ENCODE measurements at regions of chr11 and their contacts with region 1.

Region 1: GRCh38 chr11:1050581-1051355 is 14.2 kb upstream of the MUC6 start:
- DNase-seq: peak; percentile 80
- H3K4me3 ChIP-seq: no peak overlapping the region
- H3K27ac ChIP-seq: no peak overlapping the region
- H3K4me1 ChIP-seq: peaks cover 18% of the 10 kb centered on the region
- H3K27me3 ChIP-seq: no peaks in the 10 kb centered on the region
- CTCF ChIP-seq: peak; percentile 93 to 99

Region 2: GRCh38 chr11:662689-663274 is 388.0 kb before region 1 on chr11:
- CTCF ChIA-PET with region 1: no interaction called
- dilution Hi-C with region 1: no loop called
- in situ Hi-C with region 1: no loop called
- intact Hi-C with region 1: loop called (anchors 5 kb)
- DNase-seq: peak; percentile 35
- H3K4me3 ChIP-seq: no peak overlapping the region
- H3K27ac ChIP-seq: no peak overlapping the region
- H3K4me1 ChIP-seq: peaks cover 16% of the 10 kb centered on the region
- H3K27me3 ChIP-seq: no peaks in the 10 kb centered on the region
- CTCF ChIP-seq: peak; percentile 74 to 78

Region 3: DNA sequence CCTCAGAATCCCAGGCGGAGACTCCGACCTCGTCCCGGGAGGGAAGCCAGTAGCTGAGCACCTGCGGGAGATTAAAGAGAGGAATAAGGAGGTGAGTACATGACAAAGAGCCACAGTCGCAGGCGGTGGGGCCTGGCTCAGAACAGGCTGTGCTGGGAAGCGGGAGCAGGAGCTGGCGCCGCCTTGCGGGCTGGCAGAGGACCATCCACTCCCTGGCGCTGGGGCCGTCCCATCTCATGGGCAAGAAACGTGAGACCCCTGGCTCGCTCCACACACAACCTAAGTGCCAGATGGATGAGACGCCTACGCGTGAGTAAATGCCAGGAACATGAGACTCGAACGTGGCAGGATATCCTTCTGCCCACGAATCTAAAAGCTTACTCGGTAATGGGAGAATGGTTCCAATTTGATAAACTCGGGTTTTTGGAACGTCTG is 267.2 kb before region 1 on chr11:
- CTCF ChIA-PET with region 1: no interaction called
- dilution Hi-C with region 1: no loop called
- in situ Hi-C with region 1: no loop called
- intact Hi-C with region 1: loop called (anchors 5 kb)
- DNase-seq: peak; percentile 72
- H3K4me3 ChIP-seq: no peak overlapping the region
- H3K27ac ChIP-seq: no peak overlapping the region
- H3K4me1 ChIP-seq: peaks cover 32% of the 10 kb centered on the region
- H3K27me3 ChIP-seq: no peaks in the 10 kb centered on the region
- CTCF ChIP-seq: peak; percentile 69 to 81

Region 4: DNA sequence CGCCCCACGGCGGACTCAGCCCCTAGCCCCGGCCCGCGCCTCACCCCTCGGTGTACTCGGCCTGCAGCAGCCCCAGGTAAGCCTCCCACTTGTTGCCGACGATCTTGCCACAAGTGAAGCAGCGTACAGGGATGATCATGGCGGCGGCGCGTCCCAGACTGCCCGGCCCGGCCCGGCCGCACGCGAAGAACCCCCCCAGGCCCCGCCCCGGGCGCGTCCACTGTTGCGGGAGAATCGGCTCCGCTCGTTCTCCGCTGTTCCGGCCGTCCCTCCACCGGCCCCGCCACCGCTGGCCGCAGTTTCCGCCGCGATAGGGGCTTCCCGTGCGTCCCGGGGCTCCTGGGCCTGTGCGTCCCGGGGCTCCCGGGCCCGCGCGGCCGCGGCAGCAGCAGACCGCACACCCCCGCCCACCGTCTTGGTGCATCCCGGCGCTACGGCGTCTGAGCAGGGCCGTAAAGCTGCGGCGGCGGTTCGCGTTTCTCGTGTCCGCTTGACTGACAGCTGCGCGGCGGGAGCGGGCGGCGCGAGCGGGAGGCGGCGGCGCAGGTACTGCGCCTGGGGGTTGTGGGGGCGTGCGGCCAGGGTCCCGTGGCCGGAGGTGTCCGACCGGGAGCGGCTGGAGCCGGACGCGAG is 208.3 kb before region 1 on chr11 and contains the starts of genes POLR2L and TSPAN4:
- CTCF ChIA-PET with region 1: no interaction called
- dilution Hi-C with region 1: no loop called
- in situ Hi-C with region 1: no loop called
- intact Hi-C with region 1: loop called (anchors 1 kb)
- DNase-seq: peak; percentile 86
- H3K4me3 ChIP-seq: peak within 1 kb of the TSS; percentile 90 to 98 (median 93)
- H3K27ac ChIP-seq: peak within 1 kb of the TSS; percentile 75
- H3K4me1 ChIP-seq: peaks cover 71% of the 10 kb centered on the region
- H3K27me3 ChIP-seq: no peaks in the 10 kb centered on the region
- CTCF ChIP-seq: no peak
- total RNA-seq, gene POLR2L: 60.0 to 193 TPM
- total RNA-seq, gene TSPAN4: 50.3 to 81.7 TPM

Region 5: GRCh38 chr11:925496-926321 is 125.1 kb before region 1 on chr11 and contains the start of gene AP2A2:
- CTCF ChIA-PET with region 1: interaction called, 3 read pairs
- dilution Hi-C with region 1: no loop called
- in situ Hi-C with region 1: no loop called
- intact Hi-C with region 1: loop called (anchors 1 kb)
- DNase-seq: peak; percentile 81
- H3K4me3 ChIP-seq: peak within 1 kb of the TSS; percentile 72 to 82 (median 78)
- H3K27ac ChIP-seq: peak within 1 kb of the TSS; percentile 29
- H3K4me1 ChIP-seq: peaks cover 6% of the 10 kb centered on the region
- H3K27me3 ChIP-seq: no peaks in the 10 kb centered on the region
- CTCF ChIP-seq: peak; percentile 39 to 57
- total RNA-seq, gene AP2A2: 66.6 to 66.7 TPM

Region 6: DNA sequence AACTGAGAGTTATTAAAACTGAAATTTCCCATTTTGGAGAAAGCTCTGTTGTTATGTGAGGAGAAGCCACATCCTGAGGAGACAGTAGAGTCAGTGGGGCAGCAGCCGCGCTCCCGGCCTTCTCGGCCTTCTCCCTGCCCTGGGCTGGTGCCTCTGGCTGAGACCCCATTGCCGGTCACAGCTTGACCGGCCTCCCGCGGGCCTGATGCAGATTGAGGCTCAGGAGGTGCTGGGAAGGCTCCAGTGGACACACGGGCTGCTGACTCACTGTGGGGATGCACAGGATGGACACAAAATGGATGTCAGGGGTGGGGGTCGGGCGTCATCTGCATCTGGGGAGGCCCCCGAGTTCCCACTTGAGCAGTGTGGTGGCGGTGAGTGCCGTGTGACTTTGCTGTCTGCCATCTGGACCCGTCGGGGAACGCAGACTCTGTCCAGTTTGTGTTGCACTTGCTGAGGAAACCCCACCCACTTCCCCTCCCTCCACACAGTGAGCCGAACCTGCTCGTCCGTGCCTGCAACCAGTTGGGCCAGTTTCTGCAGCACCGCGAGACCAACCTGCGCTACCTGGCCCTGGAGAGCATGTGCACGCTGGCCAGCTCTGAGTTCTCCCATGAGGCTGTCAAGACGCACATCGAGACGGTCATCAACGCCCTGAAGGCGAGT is 64.3 kb before region 1 on chr11:
- CTCF ChIA-PET with region 1: no interaction called
- dilution Hi-C with region 1: loop called (anchors 5 kb)
- in situ Hi-C with region 1: no loop called
- intact Hi-C with region 1: no loop called
- DNase-seq: no peak
- H3K4me3 ChIP-seq: no peak overlapping the region
- H3K27ac ChIP-seq: no peak overlapping the region
- H3K4me1 ChIP-seq: no peaks in the 10 kb centered on the region
- H3K27me3 ChIP-seq: no peaks in the 10 kb centered on the region
- CTCF ChIP-seq: no peak

Region 7: DNA sequence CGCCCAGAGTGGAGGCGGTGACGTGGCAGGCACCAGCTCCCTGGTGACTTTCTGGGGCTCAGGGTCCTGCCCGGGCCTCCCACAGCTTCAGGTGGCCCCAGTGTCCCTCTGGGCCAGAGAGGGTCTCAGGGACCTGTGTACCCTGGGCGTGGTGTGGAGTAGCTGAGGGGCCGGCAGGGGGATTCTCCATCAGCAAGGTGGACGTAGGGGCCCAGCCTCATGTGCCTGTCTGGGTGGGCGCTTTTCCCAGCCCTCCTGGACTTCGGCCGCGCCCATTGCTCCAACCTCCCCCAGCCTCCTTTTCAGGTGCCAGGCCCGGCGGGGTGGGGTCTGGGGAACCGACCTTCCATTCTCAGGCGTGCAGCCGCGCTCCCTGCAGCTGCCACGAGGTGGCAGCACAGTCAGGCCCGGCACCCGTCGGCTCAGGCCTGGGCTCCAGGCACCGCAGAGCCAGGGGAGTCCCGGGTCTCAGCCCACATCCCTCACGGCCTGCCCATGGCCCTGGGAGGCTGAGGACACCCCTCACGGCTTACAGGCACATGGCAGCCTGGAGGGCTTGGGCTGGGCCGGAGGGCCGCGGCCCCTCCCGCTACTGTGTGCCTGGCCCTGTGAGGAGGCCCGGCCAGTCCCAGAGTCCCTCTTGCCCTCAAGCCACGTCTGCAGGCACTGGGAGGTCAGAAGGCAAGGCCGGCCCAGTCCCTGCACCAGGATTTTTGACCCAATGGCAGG is 152.2 kb after region 1 on chr11:
- CTCF ChIA-PET with region 1: no interaction called
- dilution Hi-C with region 1: no loop called
- in situ Hi-C with region 1: no loop called
- intact Hi-C with region 1: no loop called
- DNase-seq: peak; percentile 20
- H3K4me3 ChIP-seq: no peak overlapping the region
- H3K27ac ChIP-seq: no peak overlapping the region
- H3K4me1 ChIP-seq: peaks cover 20% of the 10 kb centered on the region
- H3K27me3 ChIP-seq: peaks cover 14% of the 10 kb centered on the region
- CTCF ChIP-seq: peak; percentile 85 to 95

Measured in mammary epithelial cell (primary cell).